Dorsolateral prefrontal cortex (tissue), 120 donors: ENCODE measurements at regions of chr13 and their contacts with region 1.

Region 1: DNA sequence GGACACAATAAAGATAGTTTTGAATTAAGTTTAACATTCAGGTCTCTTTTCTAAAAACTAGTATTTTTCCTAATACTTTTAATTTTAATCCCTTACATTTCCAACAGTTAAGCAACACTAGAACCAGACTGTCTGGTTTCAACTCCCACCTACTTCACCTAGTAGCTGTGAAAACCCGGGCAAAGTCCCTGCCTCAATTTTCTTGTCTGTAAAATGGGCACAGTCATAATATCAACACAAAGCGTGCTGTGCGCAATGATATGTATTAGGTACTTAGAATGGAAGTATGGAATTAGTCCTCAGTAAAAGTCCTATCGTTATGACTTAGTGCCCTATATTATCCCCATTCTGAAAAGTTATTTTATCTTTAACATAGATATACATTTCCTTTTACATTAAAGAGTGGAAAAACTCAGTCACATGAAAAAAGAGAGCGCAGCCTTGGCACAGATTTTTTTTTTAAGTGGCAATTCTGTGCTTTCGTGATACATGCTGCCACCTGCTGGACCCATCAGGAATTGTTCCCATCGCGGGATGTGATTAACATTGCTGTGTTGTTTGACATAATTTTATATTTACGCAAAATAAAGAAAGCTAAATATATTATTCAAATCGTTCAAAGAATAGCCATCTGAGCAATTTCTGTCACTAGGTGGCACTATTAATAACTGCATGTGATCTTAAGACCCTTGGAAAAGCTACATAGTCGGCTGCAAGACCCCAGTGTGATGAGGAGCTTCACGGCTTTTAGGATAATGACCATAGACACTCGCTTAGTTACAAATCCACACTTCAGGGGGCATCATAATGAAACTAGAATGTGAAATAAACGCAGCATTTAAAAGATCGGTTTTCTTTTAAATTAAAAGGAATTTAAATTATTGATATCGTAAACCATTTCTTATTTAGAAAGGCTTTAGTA is 59.9 kb downstream of the LIG4 start:
- DNase-seq: peak in 9 of 10 donors; percentile 48 to 83 (median 63)
- H3K4me3 ChIP-seq: peak overlapping the region in 14 of 59 donors; percentile 0 to 40 (median 32)
- H3K27ac ChIP-seq: no peak overlapping the region
- H3K27me3 ChIP-seq: peaks cover 0 to 3% (median 0%) of the 10 kb centered on the region in 45 donors
- CTCF ChIP-seq: peak; percentile 77 to 97 (median 89)

Region 2: DNA sequence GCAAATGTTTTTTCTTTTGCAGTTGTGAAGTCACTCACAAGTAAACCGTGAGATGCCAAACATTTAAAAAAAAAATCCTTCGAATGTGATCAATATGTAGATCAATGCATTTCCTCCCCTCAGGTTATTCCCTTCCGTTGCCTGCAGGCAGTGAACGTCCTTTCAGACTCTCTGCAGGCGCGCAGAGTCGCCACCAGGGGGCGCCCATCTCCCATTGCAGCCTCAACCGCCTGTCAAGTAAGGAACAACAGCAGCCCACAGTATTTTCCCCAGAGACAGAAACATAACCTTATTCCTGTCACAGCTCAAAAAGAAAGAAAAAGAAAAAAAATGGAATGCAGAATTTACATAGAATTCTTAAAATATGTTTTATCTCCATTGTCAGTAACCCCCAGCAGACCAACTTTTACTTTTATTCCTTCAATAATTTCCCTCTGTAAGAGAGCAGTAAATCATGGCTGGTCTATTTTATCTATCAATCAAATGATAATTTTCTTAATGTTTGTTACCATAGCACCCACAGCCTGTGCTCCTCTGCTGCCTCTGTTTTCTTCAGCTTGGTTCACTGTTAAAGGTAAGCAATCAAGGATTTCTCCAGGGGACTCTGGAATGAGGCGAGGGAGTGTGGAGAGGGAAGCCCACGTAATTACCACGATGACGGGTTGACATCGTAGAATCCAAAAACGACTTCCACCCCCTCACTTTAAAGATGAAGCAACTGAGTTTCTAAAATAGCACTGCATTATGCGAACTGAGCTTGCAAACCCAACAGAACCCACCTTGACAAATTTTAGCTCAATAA is 949.9 kb before region 1 on chr13:
- intact Hi-C with region 1: loop called (anchors 5 kb)
- DNase-seq: peak; percentile 62 to 89 (median 76)
- H3K4me3 ChIP-seq: peak overlapping the region in 11 of 59 donors; percentile 0 to 27 (median 13)
- H3K27ac ChIP-seq: peak overlapping the region in 2 of 59 donors; percentile 34 to 40
- H3K27me3 ChIP-seq: no peaks in the 10 kb centered on the region
- CTCF ChIP-seq: peak; percentile 91 to 100 (median 97)

Region 3: DNA sequence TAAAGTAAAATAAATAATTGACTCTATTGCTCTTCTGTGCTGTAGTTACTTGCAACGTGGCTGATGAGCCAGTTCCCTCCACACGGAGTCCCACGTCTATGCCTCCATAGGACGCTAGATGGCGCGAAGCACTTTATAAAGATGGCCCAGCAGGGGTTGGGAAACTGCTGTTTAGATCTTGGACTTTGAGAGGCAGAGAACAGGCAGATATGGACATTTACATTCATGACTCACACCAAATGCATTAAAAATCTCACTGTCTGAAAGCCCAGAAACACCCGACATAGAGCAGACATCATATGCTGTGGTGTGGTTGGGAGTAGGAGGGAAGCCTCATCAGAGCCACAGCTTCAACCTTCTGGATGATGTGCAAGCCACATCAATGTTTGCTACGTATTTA is 944.4 kb before region 1 on chr13:
- intact Hi-C with region 1: loop called (anchors 5 kb)
- DNase-seq: peak; percentile 59 to 93 (median 84)
- H3K4me3 ChIP-seq: peak overlapping the region in 58 of 59 donors; percentile 9 to 64 (median 44)
- H3K27ac ChIP-seq: peak overlapping the region in 32 of 59 donors; percentile 0 to 67 (median 38)
- H3K27me3 ChIP-seq: no peaks in the 10 kb centered on the region
- CTCF ChIP-seq: peak; percentile 79 to 99 (median 96)

Region 4: DNA sequence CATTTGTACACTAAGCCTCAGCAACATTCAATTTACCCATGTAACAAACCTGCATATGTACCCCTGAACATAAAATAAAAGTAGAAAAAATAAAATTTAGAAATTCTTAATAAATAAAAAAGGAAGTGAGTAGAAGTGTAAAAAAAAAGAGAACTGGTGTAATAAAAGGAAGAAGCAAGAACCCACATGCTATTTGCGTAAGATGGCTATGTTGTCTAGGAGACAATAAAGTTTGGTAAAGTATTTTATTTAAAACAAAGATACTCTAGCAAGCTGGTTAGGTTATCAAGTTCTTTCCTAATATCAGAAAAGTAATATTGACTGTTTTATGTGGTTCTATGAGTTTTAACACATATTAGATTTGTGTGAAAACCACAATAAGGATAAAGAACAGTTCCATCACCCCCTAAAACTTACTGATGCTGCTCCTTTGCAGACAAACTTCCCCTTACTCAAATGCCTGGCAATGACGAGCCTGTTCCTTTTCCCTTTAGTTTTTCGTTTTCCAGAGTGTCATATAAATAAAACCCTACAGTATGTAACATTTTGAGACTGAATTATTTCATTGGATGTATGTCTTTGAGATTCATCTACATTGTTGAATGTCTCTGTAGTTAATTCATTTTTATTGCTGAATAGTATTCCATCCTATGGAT is 212.9 kb after region 1 on chr13:
- intact Hi-C with region 1: no loop called
- DNase-seq: no peak
- H3K4me3 ChIP-seq: no peak overlapping the region
- H3K27ac ChIP-seq: no peak overlapping the region
- H3K27me3 ChIP-seq: no peaks in the 10 kb centered on the region
- CTCF ChIP-seq: no peak